HEK293 (cell line): ENCODE measurements at regions of chr12 and their contacts with region 1.

Region 1: DNA sequence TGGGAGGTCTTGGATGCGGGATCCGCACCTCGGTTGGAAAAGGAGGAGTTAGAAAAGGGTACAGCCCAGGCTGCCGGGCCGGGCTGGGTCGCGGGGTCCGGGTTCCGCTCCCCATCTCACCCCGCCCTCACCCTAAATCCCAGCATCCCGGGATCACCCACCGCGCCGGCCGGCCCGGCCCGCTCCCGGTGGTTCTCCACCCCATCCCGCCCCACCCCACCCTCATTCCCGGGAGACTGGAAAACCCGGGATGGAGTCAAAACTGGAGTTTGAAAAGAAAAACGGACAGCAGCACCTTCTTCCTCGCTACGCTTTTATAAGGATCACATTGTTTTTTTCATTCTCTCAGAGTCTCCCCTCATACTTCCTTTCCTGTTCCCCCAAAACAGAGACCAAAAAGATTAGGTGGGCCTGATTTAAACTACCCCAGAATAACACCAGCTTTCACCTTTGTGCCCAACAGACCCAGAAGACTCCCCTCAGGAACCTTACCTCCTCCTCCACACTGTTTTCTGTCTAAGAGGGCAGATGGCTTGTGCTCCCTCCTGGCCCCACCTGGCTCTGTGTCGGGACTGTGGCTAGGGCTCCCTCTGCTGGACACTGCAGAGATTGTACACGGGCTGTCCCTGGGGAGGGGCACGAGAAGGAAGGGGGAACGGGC is 2.8 kb downstream of the GLI1 start:
- H3K4me3 ChIP-seq: peak overlapping the region; percentile 48
- H3K27ac ChIP-seq: peak overlapping the region; percentile 25
- H3K4me1 ChIP-seq: peaks cover 8% of the 10 kb centered on the region
- CTCF ChIP-seq: peak; percentile 94

Region 2: GRCh38 chr12:57229634-57230380 is 232.6 kb before region 1 on chr12 and contains the start of gene SHMT2:
- CTCF ChIA-PET with region 1: interaction called, 5 read pairs
- POLR2A ChIA-PET with region 1: interaction called, 11 read pairs
- H3K4me3 ChIP-seq: peak within 1 kb of the TSS; percentile 46
- H3K27ac ChIP-seq: peak within 1 kb of the TSS; percentile 87
- H3K4me1 ChIP-seq: peaks cover 17% of the 10 kb centered on the region
- CTCF ChIP-seq: no peak

Region 3: DNA sequence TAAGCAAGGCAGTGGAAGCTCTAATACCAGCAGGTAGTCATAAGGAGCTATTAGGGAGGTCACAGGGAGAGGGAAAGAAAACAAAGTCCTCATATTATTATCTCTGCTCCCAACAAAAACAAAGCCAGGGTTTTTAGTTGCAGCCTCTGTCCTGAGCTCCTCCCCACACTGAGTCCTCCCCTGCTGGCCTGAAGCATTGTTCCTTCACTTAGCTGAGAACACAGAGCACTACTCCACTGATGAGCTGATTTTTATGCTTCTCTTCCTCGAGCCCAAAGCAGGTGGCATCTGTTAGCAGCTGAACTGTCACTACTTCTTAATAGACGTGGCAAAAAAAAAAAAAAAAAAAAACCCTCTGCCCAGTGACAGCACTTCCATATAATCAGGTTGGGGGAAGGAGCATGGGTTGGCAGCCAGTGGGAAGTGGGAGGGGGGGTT is 200.9 kb before region 1 on chr12:
- CTCF ChIA-PET with region 1: interaction called, 24 read pairs
- POLR2A ChIA-PET with region 1: no interaction called
- H3K4me3 ChIP-seq: no peak overlapping the region
- H3K27ac ChIP-seq: no peak overlapping the region
- H3K4me1 ChIP-seq: peaks cover 13% of the 10 kb centered on the region; the same call in 1 of the 2 replicates
- CTCF ChIP-seq: no peak

Region 4: DNA sequence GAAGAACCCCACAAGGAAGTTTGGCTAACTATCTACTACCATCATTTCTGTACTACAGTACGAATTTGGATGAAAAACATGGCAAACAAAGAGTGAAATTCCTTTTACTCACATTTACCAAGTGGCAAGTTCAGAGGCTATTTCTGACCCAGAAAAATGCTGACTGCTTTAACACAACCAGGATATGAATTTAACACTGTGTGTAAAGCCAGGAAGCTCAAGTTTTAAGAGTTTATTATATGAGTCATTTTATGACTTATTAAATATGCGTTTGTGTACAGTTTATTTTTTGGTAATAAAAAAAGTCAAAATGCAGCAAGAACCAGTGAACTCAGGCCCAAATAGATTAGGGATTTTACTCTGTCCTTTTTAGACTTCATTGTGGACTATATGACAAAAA is 153.0 kb before region 1 on chr12:
- CTCF ChIA-PET with region 1: interaction called, 15 read pairs
- POLR2A ChIA-PET with region 1: no interaction called
- H3K4me3 ChIP-seq: no peak overlapping the region
- H3K27ac ChIP-seq: no peak overlapping the region
- H3K4me1 ChIP-seq: no peaks in the 10 kb centered on the region; the same call in 1 of the 2 replicates
- CTCF ChIP-seq: no peak

Region 5: GRCh38 chr12:57475271-57476161 is 13.1 kb after region 1 on chr12:
- CTCF ChIA-PET with region 1: interaction called, 19 read pairs
- POLR2A ChIA-PET with region 1: interaction called, 3 read pairs
- H3K4me3 ChIP-seq: no peak overlapping the region
- H3K27ac ChIP-seq: no peak overlapping the region
- H3K4me1 ChIP-seq: no peaks in the 10 kb centered on the region
- CTCF ChIP-seq: no peak

Region 6: DNA sequence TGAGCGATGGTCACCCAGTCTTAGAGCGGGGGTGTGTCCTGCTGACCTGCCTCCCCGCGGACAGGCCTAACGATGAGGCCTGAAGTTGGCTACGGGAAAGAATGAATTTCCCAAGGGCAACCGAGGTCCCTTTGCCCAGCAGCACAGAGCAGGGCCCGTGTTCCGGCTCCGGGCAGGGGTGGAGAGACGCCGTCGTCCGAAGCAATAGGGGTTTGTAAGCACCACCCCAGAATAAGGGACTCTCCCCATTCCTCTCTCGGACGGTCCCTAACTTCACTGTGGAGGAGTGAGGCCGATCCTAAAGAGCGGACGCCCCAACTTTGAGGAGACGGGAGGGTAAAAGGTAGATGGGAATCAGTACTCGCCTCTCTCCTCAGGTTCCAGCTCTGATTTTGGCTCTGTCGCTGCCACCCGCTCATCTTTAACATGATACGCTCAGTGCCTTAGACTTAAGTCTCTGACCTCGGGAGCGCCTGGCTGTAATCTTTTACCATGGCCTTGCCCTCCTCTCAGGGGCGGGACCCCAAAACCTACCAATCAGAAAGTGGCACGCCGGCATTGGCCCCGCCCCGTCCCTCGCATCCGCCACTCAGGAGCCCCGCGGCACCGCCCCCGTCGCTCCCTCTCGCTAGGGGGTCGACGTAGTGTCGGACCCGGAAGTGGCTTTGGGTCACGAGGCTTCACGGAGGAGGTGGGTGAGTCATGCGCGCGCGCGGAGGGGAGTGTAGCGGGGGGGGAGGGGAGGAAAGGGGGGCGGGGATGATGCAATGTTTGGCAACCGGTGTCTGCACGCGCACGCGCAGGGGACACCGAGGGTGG is 57.9 kb after region 1 on chr12 and contains the start of gene DDIT3:
- CTCF ChIA-PET with region 1: interaction called, 5 read pairs
- POLR2A ChIA-PET with region 1: interaction called, 13 read pairs
- H3K4me3 ChIP-seq: peak within 1 kb of the TSS; percentile 79
- H3K27ac ChIP-seq: peak within 1 kb of the TSS; percentile 94
- H3K4me1 ChIP-seq: peaks cover 13% of the 10 kb centered on the region
- CTCF ChIP-seq: peak; percentile 76